Right lobe of liver (tissue), 6 donors: ENCODE measurements at regions of chr3 and their contacts with region 1.

Region 1: GRCh38 chr3:14261229-14261628 is 82.6 kb downstream of the LSM3 start:
- DNase-seq: peak; percentile 80 to 83 (median 82)
- ATAC-seq: peak; percentile 87 to 96 (median 91)
- H3K4me3 ChIP-seq: no peak overlapping the region
- H3K27ac ChIP-seq: no peak overlapping the region
- H3K4me1 ChIP-seq: no peaks in the 10 kb centered on the region
- H3K27me3 ChIP-seq: no peaks in the 10 kb centered on the region
- CTCF ChIP-seq: peak; percentile 91 to 99 (median 98)
- POLR2A ChIP-seq: no peak

Region 2: GRCh38 chr3:14203521-14204079 is 57.6 kb before region 1 on chr3:
- intact Hi-C with region 1: loop called in 1 of 2 experiments (anchors 10 kb)
- DNase-seq: peak; percentile 48 to 75 (median 67)
- ATAC-seq: peak; percentile 72 to 77 (median 76)
- H3K4me3 ChIP-seq: no peak overlapping the region
- H3K27ac ChIP-seq: peak overlapping the region in 1 of 3 donors; percentile 44
- H3K4me1 ChIP-seq: peaks cover 0 to 42% (median 20%) of the 10 kb centered on the region in 4 donors
- H3K27me3 ChIP-seq: no peaks in the 10 kb centered on the region
- CTCF ChIP-seq: peak; percentile 87 to 95 (median 90)
- POLR2A ChIP-seq: no peak

Region 3: DNA sequence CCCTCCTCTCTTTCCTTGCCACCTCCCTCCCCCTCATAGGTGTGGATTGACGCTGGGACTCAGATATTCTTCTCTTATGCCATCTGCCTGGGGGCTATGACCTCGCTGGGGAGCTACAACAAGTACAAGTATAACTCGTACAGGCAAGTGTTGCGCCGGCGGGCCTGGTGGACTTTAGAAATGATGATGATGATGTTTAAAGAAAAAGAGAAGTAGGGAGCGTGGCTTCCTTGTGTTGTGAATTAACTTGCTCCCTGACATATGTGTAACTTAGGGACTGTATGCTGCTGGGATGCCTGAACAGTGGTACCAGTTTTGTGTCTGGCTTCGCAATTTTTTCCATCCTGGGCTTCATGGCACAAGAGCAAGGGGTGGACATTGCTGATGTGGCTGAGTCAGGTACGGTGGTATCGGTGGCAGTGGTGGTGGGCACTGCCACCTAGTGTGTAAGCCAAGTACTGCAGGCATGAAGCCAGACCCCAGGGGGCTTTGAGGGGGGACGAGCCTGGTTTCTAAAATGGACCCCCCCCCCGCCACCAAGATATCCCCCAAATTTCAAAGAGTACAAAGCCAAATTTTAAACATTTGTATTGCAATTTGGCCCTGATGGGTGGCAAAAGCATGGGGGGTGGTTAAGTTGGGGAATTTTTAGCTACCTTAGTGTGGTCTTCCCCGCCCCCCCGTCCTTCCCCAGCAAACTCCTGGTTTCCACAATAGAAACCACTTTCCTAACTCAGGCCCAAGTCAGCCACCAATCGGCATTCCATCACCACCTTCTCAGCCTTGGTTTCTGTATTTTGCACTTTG is 206.8 kb after region 1 on chr3:
- intact Hi-C with region 1: loop called (anchors 5 kb)
- DNase-seq: no peak
- ATAC-seq: peak; percentile 68 to 89 (median 82)
- H3K4me3 ChIP-seq: no peak overlapping the region
- H3K27ac ChIP-seq: no peak overlapping the region
- H3K4me1 ChIP-seq: no peaks in the 10 kb centered on the region
- H3K27me3 ChIP-seq: no peaks in the 10 kb centered on the region
- CTCF ChIP-seq: peak; percentile 82 to 94 (median 85)
- POLR2A ChIP-seq: no peak

Region 4: DNA sequence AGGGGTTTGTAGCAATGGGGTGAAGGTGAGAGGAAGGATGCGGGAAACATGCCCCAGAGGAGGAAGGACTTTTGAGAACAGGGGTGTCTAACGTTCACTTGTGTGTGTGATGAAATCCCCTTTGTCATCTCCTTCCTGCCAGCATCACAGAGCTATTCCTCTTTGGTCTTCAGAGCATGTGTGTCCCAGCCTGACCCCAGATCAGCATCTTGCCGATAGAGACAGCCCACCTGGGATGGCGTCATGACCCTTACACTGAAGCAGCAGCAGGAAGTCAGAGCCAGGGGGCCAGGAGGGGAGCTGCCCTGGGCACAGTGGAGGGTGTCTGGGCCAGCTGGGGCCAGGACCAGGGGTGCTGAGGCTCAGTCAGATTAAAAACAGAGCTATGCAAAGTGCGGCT is 308.9 kb after region 1 on chr3:
- intact Hi-C with region 1: no loop called
- DNase-seq: no peak
- ATAC-seq: peak in 1 of 4 donors; percentile 9
- H3K4me3 ChIP-seq: no peak overlapping the region
- H3K27ac ChIP-seq: no peak overlapping the region
- H3K4me1 ChIP-seq: peaks cover 0 to 5% (median 0%) of the 10 kb centered on the region in 4 donors
- H3K27me3 ChIP-seq: no peaks in the 10 kb centered on the region
- CTCF ChIP-seq: no peak
- POLR2A ChIP-seq: no peak